ENCODE measurements at regions of chr18 and their contacts with region 1.

Region 1: DNA sequence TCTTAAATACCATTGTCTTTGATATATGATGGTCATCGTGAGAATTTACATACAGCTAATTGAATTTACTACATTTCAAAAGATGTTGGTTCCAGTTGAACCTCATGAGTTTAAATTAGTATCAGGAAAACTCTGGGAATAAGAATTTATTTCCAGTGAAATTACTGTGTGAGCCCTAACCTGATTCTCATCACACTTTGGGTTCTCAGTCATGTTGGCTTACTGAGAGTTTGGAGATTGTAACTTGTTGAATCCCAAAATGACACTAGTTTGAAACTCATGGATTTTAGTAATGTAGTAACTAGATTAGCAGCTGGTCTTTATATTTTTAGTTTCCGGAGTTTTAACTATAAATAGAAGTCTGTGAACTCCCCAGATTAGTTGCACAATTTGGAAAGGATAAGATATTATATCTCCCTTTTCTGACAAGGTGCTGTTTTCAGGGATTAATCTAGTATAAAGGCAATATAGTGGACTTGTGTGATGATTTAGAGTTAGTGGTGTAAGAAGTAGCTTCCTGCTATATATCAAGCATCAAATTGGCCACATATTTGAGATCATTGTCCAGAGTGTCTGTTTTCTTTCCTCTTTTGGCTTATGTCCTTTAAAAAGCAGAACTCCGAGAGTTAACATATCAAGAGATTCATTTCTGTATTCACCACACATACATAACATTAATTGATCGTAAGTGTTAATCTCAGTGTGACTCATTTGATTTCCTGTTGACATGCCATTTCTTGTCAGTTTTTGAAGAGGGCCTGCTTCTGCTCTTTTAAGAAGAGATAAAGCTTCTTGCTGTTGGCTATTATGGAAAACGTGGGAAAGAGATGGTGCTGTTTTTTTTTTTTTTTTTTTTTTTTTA is 15.7 kb downstream of the NDUFV2 start:
- DNase-seq: peak in 3 of 14 experiments; percentile 75 to 85 (median 79)
- ATAC-seq: peak; percentile 57
- H3K4me3 ChIP-seq: peak overlapping the region; percentile 54
- H3K4me3 Mint-ChIP-seq: peak overlapping the region; percentile 84
- H3K27ac ChIP-seq: peak overlapping the region; percentile 77 to 94
- H3K27ac Mint-ChIP-seq: peak overlapping the region; percentile 95
- H3K4me1 ChIP-seq: peaks cover 27% of the 10 kb centered on the region
- H3K4me1 Mint-ChIP-seq: peaks cover 91% of the 10 kb centered on the region
- H3K27me3 ChIP-seq: no peaks in the 10 kb centered on the region
- H3K27me3 Mint-ChIP-seq: no peaks in the 10 kb centered on the region
- CTCF ChIP-seq: no peak

Region 2: GRCh38 chr18:8922669-8923068 is 195.5 kb before region 1 on chr18:
- CTCF ChIA-PET with region 1: no interaction called
- POLR2A ChIA-PET with region 1: no interaction called
- intact Hi-C with region 1: no loop called
- DNase-seq: no peak
- ATAC-seq: no peak
- H3K4me3 ChIP-seq: no peak overlapping the region
- H3K4me3 Mint-ChIP-seq: no peak overlapping the region
- H3K27ac ChIP-seq: no peak overlapping the region
- H3K27ac Mint-ChIP-seq: no peak overlapping the region
- H3K4me1 ChIP-seq: no peaks in the 10 kb centered on the region
- H3K4me1 Mint-ChIP-seq: no peaks in the 10 kb centered on the region
- H3K27me3 ChIP-seq: no peaks in the 10 kb centered on the region
- H3K27me3 Mint-ChIP-seq: no peaks in the 10 kb centered on the region
- CTCF ChIP-seq: no peak

Region 3: GRCh38 chr18:9082711-9083510 is 35.3 kb before region 1 on chr18:
- CTCF ChIA-PET with region 1: interaction called, 4 read pairs
- POLR2A ChIA-PET with region 1: interaction called, 23 read pairs
- intact Hi-C with region 1: no loop called
- DNase-seq: peak in 6 of 14 experiments; percentile 8 to 78 (median 52)
- ATAC-seq: peak; percentile 85
- H3K4me3 ChIP-seq: peak overlapping the region; percentile 1
- H3K4me3 Mint-ChIP-seq: peak overlapping the region; percentile 69
- H3K27ac ChIP-seq: peak overlapping the region; percentile 60 to 68
- H3K27ac Mint-ChIP-seq: peak overlapping the region; percentile 88
- H3K4me1 ChIP-seq: peaks cover 33% of the 10 kb centered on the region
- H3K4me1 Mint-ChIP-seq: peaks cover 28% of the 10 kb centered on the region
- H3K27me3 ChIP-seq: no peaks in the 10 kb centered on the region
- H3K27me3 Mint-ChIP-seq: no peaks in the 10 kb centered on the region
- CTCF ChIP-seq: no peak

Region 4: DNA sequence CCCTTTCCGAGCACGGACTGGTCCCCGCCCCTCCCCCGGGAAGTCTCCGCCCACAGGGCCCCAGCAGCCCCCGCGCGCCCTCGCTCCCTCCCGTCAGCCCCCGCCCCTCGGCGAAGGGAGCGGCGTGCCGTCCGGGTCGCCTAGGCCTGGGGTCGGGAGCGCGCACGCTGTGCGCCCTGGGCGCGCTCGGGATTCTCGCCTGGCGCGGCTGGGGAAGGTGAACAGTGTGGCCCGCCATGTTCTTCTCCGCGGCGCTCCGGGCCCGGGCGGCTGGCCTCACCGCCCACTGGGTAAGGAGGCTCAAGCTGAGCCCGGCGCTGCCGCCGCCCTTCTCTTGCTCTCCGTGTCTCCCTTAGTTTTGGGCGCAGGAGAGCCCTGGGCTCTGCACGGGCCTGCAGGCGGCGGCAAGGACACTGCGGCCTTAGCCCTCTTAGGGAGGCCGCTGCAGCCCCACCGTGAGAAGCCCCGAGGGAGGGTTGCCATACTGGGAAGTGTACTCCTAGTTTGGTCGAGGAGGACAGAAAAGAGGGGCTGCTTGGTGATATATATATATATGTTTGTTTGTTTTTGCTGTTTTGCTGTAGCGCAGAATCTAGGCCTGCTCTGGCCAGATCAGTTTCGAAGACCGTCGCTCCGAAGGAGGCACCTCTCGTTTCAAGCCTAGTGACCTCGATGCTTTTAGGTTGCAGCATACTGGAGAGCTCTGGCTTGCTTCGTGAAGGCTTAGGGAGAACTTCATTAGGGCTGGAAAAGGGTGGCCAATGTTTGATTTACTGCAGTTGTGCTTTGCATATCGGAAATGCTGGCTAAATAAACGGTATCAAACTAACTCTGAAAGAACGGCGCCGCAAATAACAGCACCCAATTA is 15.5 kb before region 1 on chr18 and contains the start of gene NDUFV2:
- CTCF ChIA-PET with region 1: interaction called, 13 read pairs
- POLR2A ChIA-PET with region 1: interaction called, 198 read pairs
- intact Hi-C with region 1: loop called (anchors 1 kb)
- DNase-seq: peak; percentile 93 to 99 (median 98)
- ATAC-seq: peak; percentile 87
- H3K4me3 ChIP-seq: peak within 1 kb of the TSS; percentile 74
- H3K4me3 Mint-ChIP-seq: peak within 1 kb of the TSS; percentile 95
- H3K27ac ChIP-seq: peak within 1 kb of the TSS; percentile 82 to 91
- H3K27ac Mint-ChIP-seq: peak within 1 kb of the TSS; percentile 90
- H3K4me1 ChIP-seq: peaks cover 22% of the 10 kb centered on the region
- H3K4me1 Mint-ChIP-seq: peaks cover 65% of the 10 kb centered on the region
- H3K27me3 ChIP-seq: no peaks in the 10 kb centered on the region
- H3K27me3 Mint-ChIP-seq: no peaks in the 10 kb centered on the region
- CTCF ChIP-seq: no peak
- total RNA-seq, gene NDUFV2: 230 to 231 TPM

Region 5: GRCh38 chr18:9147440-9148202 is 29.4 kb after region 1 on chr18:
- CTCF ChIA-PET with region 1: no interaction called
- POLR2A ChIA-PET with region 1: interaction called, 914 read pairs
- intact Hi-C with region 1: no loop called
- DNase-seq: peak in 7 of 14 experiments; percentile 18 to 81 (median 44)
- ATAC-seq: peak; percentile 74
- H3K4me3 ChIP-seq: no peak overlapping the region
- H3K4me3 Mint-ChIP-seq: no peak overlapping the region
- H3K27ac ChIP-seq: no peak overlapping the region
- H3K27ac Mint-ChIP-seq: peak overlapping the region; percentile 10
- H3K4me1 ChIP-seq: peaks cover 28% of the 10 kb centered on the region
- H3K4me1 Mint-ChIP-seq: peaks cover 85% of the 10 kb centered on the region
- H3K27me3 ChIP-seq: no peaks in the 10 kb centered on the region
- H3K27me3 Mint-ChIP-seq: no peaks in the 10 kb centered on the region
- CTCF ChIP-seq: peak; percentile 76

Region 6: GRCh38 chr18:10525371-10526210 is 1407.4 kb after region 1 on chr18 and contains the start of gene NAPG:
- CTCF ChIA-PET with region 1: no interaction called
- POLR2A ChIA-PET with region 1: no interaction called
- intact Hi-C with region 1: loop called in 1 of 2 experiments (anchors 10 kb)
- DNase-seq: peak; percentile 75 to 98 (median 86)
- ATAC-seq: peak; percentile 85
- H3K4me3 ChIP-seq: peak within 1 kb of the TSS; percentile 87
- H3K4me3 Mint-ChIP-seq: peak within 1 kb of the TSS; percentile 99
- H3K27ac ChIP-seq: peak within 1 kb of the TSS; percentile 55 to 86
- H3K27ac Mint-ChIP-seq: peak within 1 kb of the TSS; percentile 96
- H3K4me1 ChIP-seq: peaks cover 42% of the 10 kb centered on the region
- H3K4me1 Mint-ChIP-seq: peaks cover 56% of the 10 kb centered on the region
- H3K27me3 ChIP-seq: peaks cover 0 to 5% of the 10 kb centered on the region in 2 experiments
- H3K27me3 Mint-ChIP-seq: no peaks in the 10 kb centered on the region
- CTCF ChIP-seq: no peak
- total RNA-seq, gene NAPG: 25.9 to 27.3 TPM